PC-9 (cell line): ENCODE measurements at regions of chr10 and their contacts with region 1.

Region 1: DNA sequence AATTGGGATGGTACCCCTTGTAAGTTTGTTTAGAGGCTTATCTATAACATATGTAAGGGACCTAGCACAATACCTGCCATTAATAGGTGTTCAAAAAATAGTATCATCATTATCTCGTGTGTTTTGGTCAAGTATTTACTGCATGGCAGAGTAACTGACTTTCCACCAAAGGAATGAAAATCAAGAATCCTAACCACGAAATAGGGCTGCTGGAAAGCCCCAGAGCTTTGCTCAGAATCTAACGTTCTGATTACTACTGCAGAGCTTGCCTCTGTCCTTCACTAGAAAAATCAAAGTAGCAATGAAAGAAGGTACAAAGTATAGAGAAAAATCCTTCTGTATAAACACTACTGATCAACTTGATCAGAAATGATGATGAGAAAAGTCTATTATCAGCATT is 34.9 kb downstream of the DCLRE1C start:
- DNase-seq: no peak
- H3K4me3 ChIP-seq: no peak overlapping the region
- H3K27ac ChIP-seq: no peak overlapping the region
- H3K4me1 ChIP-seq: no peaks in the 10 kb centered on the region
- H3K27me3 ChIP-seq: no peaks in the 10 kb centered on the region
- CTCF ChIP-seq: no peak

Region 2: DNA sequence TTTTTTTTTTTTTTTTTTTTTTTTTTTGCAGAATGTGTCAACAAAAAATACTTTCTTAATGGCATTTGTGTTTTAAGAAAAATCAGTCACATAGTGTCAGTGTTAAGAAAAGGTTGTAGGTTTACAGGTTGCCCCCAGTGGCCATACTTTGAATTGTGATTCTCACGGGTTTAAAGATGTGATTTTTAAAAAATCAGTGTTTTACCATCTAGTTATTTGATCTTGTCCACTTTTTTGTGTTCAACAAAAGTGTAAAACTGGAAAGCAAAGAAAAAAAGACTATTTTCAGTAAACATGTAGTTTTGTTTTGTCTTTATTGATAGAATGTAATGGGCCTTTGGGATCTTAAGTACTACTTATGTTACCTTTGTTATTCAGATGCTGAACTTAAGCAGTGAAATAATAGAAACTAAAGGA is 14.6 kb before region 1 on chr10:
- CTCF ChIA-PET with region 1: interaction called, 10 read pairs
- POLR2A ChIA-PET with region 1: no interaction called
- intact Hi-C with region 1: no loop called
- DNase-seq: peak in 1 of 2 experiments; percentile 6
- H3K4me3 ChIP-seq: no peak overlapping the region
- H3K27ac ChIP-seq: no peak overlapping the region
- H3K4me1 ChIP-seq: no peaks in the 10 kb centered on the region
- H3K27me3 ChIP-seq: no peaks in the 10 kb centered on the region
- CTCF ChIP-seq: peak; percentile 57

Region 3: GRCh38 chr10:14959276-14960057 is 40.5 kb after region 1 on chr10 and contains the start of gene MEIG1:
- CTCF ChIA-PET with region 1: no interaction called
- POLR2A ChIA-PET with region 1: no interaction called
- intact Hi-C with region 1: no loop called
- DNase-seq: peak; percentile 73 to 96
- H3K4me3 ChIP-seq: peak within 1 kb of the TSS; percentile 97
- H3K27ac ChIP-seq: peak within 1 kb of the TSS; percentile 97
- H3K4me1 ChIP-seq: peaks cover 11% of the 10 kb centered on the region
- H3K27me3 ChIP-seq: no peaks in the 10 kb centered on the region
- CTCF ChIP-seq: no peak
- total RNA-seq, gene MEIG1: 1.8 and 4.1 TPM in 2 replicates